ENCODE measurements at regions of chr11 and their contacts with region 1.

Region 1: GRCh38 chr11:68870470-68870869 is 28.8 kb upstream of the CPT1A start:
- DNase-seq: no peak
- H3K4me3 ChIP-seq: no peak overlapping the region
- H3K27ac ChIP-seq: no peak overlapping the region
- H3K4me1 ChIP-seq: no peaks in the 10 kb centered on the region
- H3K27me3 ChIP-seq: peaks cover 3% of the 10 kb centered on the region
- CTCF ChIP-seq: no peak

Region 2: DNA sequence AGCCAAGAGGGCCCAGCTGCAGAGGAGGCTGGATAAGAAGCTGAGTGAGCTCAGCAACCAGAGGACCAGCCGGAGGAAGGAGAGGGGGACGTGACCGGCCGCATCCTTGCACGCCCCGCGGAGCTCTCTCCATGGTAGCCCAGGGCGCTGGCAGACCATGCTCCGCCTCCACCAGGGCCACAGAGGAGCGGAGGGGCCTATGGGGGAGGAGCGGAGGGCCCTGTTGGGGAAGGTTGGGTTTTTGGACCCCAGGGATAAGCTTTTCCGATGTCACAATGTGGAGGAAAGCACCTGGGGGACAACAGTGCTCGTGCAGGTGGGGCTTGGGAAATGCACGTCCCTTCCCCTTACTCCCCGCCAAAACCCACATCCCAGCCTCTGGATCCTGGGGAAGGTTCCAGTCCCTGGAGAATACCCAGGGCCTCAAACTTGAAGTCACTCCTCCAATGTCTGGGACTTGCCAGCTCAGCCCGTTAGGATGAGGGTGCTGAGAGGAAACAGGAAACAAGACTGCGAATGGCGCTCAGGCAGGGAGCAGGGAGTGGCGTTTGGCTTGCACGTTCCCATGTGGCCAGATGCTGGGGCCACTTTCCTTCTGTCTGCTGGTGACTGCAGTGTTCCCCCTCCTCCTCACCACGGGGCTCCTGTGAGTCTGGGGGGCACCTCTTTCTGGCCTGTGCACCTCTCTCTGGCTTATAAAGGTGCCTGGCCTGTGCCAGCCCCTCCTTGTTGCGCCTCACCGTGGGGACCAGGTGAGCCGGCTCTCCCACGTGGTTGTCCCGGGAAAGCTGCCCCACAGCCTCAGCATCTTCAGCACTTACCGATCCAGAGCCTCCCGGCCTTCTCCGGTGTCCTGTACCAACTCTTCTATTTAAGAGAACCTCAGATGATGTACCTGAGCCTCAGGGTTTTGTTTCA is 69.4 kb after region 1 on chr11:
- CTCF ChIA-PET with region 1: no interaction called
- dilution Hi-C with region 1: no loop called
- in situ Hi-C with region 1: loop called in 1 of 2 experiments (anchors 10 kb)
- intact Hi-C with region 1: no loop called
- DNase-seq: no peak
- H3K4me3 ChIP-seq: no peak overlapping the region
- H3K27ac ChIP-seq: no peak overlapping the region
- H3K4me1 ChIP-seq: peaks cover 6% of the 10 kb centered on the region
- H3K27me3 ChIP-seq: no peaks in the 10 kb centered on the region
- CTCF ChIP-seq: no peak